Aorta (tissue), 5 donors: ENCODE measurements at regions of chr1 and their contacts with region 1.

Region 1: GRCh38 chr1:91774520-91775203 is 111.3 kb downstream of the TGFBR3 start:
- DNase-seq: no peak
- ATAC-seq: no peak
- H3K4me3 ChIP-seq: no peak overlapping the region
- H3K27ac ChIP-seq: no peak overlapping the region
- H3K4me1 ChIP-seq: peaks cover 0 to 5% of the 10 kb centered on the region in 2 donors
- H3K27me3 ChIP-seq: no peaks in the 10 kb centered on the region

Region 2: GRCh38 chr1:91582431-91582921 is 192.2 kb before region 1 on chr1:
- intact Hi-C with region 1: no loop called
- DNase-seq: no peak
- ATAC-seq: peak; percentile 75
- H3K4me3 ChIP-seq: no peak overlapping the region
- H3K27ac ChIP-seq: no peak overlapping the region
- H3K4me1 ChIP-seq: peaks cover 0 to 4% of the 10 kb centered on the region in 2 donors
- H3K27me3 ChIP-seq: no peaks in the 10 kb centered on the region

Region 3: GRCh38 chr1:91645031-91645430 is 129.6 kb before region 1 on chr1:
- intact Hi-C with region 1: no loop called
- DNase-seq: no peak
- ATAC-seq: no peak
- H3K4me3 ChIP-seq: no peak overlapping the region
- H3K27ac ChIP-seq: no peak overlapping the region
- H3K4me1 ChIP-seq: no peaks in the 10 kb centered on the region
- H3K27me3 ChIP-seq: no peaks in the 10 kb centered on the region

Region 4: DNA sequence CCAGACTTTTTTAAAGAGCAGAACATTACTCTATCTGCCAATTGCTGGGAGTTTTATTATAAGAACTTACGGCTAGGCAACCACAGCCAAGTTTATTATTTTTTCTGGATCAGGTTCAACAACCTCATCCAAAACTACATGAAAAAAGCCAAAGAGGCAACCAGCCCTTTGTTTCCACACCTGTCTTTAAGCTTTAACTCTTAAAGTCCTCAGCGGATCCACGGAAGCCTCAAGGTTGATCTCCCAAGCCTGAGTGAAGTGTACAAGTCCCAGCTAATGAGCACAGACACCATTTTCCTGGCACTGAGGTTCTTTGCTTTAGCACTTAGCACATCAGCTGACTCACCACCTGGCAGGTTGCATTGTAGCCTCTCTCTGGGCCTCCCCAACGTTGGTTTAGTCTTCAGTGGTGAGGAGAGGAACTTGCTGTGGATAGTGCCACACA is 31.8 kb before region 1 on chr1:
- intact Hi-C with region 1: loop called in 1 of 2 experiments (anchors 5 kb)
- DNase-seq: peak; percentile 79 to 87
- ATAC-seq: peak; percentile 33
- H3K4me3 ChIP-seq: no peak overlapping the region
- H3K27ac ChIP-seq: peak overlapping the region in 1 of 2 donors; percentile 43
- H3K4me1 ChIP-seq: peaks cover 0 to 17% of the 10 kb centered on the region in 2 donors
- H3K27me3 ChIP-seq: no peaks in the 10 kb centered on the region